ENCODE measurements at regions of chr5 and their contacts with region 1.

Region 1: GRCh38 chr5:36690041-36690961 is 83.9 kb downstream of the SLC1A3 start:
- DNase-seq: no peak
- H3K4me3 ChIP-seq: peak overlapping the region; percentile 61
- CTCF ChIP-seq: peak; percentile 94

Region 2: GRCh38 chr5:36079200-36079761 is 611.0 kb before region 1 on chr5:
- CTCF ChIA-PET with region 1: interaction called, 20 read pairs
- POLR2A ChIA-PET with region 1: no interaction called
- DNase-seq: no peak
- H3K4me3 ChIP-seq: no peak overlapping the region
- CTCF ChIP-seq: peak; percentile 58

Region 3: GRCh38 chr5:36264202-36264760 is 426.0 kb before region 1 on chr5:
- CTCF ChIA-PET with region 1: interaction called, 35 read pairs
- POLR2A ChIA-PET with region 1: no interaction called
- DNase-seq: no peak
- H3K4me3 ChIP-seq: no peak overlapping the region
- CTCF ChIP-seq: no peak

Region 4: GRCh38 chr5:36414869-36415282 is 275.4 kb before region 1 on chr5:
- CTCF ChIA-PET with region 1: interaction called, 566 read pairs
- POLR2A ChIA-PET with region 1: interaction called, 3 read pairs
- DNase-seq: no peak
- H3K4me3 ChIP-seq: no peak overlapping the region
- CTCF ChIP-seq: peak; percentile 20

Region 5: DNA sequence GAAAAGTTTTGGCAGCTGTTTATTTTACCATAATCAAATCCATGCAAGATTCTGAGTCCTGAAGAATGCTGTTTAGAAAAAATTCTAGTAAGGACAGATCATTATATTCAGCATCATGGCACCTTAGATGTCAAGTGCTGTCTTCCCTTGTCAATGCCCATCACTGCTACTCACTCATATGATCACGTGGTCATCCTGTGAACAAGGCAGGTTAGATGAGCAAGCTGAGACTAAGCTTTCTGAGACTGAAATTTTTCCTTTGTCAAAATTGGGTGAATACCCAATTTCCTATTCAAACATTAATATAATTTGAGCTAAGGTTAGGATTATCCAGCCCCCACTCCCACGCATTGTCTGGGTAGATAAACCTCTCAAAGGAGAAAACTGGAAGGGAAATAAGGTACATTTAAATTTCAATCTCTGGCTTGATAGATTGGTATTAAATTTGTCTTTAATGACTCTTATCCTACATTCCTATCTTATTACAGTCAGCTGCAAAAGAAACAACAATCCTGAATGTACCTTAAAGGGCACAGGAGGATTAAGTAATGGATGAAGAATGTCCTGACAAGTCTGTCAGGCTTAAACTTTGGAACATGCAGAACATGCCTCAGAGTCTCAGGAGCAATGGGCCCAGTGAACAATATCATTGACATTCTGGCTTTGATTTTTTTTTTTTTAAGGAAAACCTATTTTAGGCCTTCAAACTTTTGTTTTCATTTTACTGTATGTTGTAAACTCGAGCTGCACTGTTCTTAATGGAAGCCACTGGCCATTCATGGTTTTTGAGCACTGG is 239.9 kb before region 1 on chr5:
- CTCF ChIA-PET with region 1: no interaction called
- POLR2A ChIA-PET with region 1: no interaction called
- DNase-seq: no peak
- H3K4me3 ChIP-seq: no peak overlapping the region
- CTCF ChIP-seq: no peak

Region 6: DNA sequence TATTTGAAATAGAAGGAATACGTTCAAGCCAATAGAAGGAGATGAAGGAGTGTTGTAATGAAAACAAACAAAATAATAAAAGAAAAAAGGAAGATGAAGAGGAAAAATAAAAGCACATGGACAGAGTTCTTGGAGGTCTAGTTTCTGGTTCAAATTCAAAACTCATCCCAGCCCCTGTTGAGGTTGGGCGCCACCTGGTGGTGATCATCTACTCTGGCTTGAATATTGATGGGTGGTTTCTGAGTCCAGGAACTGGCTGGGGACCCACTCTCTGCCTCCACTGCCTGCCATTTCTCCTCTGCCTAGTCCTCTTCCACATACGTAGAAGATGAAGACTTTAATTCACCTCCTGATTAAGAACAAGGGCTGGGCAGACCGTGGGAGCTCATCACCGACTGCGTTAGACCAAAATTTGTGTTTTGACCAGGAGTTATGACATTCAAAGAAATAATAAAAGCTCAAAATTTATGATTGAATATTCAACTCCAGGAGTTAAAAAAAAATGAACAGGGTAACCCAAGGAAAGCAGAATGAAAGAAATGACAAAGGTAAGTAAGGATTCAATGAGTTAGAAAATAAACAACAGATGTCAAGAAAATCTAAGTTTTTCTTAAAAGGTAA is 182.9 kb before region 1 on chr5:
- CTCF ChIA-PET with region 1: interaction called, 165 read pairs
- POLR2A ChIA-PET with region 1: no interaction called
- DNase-seq: peak; percentile 9
- H3K4me3 ChIP-seq: no peak overlapping the region
- CTCF ChIP-seq: peak; percentile 82

Region 7: GRCh38 chr5:36606428-36607113 is 83.7 kb before region 1 on chr5 and contains the start of gene SLC1A3:
- CTCF ChIA-PET with region 1: interaction called, 11 read pairs
- POLR2A ChIA-PET with region 1: no interaction called
- DNase-seq: no peak
- H3K4me3 ChIP-seq: peak within 1 kb of the TSS; percentile 66
- CTCF ChIP-seq: no peak

Measured in AG04449 (cell line).